MCF 10A (cell line): ENCODE measurements at regions of chr20 and their contacts with region 1.

Region 1: DNA sequence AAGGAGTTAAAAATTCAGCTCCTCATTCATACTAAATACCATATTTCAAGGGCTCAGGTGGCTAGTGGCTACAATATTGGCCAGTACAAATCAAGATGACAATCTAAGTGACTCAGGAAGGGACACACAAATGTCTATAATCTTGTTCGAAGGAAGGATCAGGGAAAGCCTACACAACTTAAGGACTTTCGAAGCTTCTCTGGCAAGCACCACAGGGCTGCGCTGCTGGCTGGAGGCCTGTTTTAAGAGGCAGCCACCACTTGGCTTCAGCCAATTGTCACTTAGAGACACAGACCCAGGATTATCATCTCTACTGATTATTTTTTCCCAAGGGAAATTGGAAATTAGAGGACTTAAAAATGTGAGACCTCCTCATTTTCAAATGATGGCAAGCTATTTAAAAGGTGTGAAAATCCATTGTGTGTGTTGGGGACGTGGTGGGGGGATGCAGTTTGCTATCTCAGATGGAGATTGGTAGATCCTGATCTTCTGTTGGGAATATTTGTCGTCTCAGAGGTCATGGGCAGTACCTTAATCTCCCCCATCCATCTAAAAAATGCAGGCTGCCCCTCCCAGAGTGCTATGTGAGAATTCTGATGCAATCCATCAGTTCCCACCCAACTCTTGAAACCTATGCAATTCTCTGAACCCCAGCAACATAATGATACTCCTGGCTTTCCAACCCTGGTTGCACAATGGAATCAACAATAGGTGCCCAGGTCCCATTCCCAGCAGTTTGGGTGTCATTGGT is 11.3 kb downstream of the ARHGAP40 start:
- DNase-seq: no peak
- H3K4me3 Mint-ChIP-seq: no peak overlapping the region
- H3K27ac Mint-ChIP-seq: no peak overlapping the region
- H3K4me1 Mint-ChIP-seq: peaks cover 15% of the 10 kb centered on the region
- H3K27me3 Mint-ChIP-seq: no peaks in the 10 kb centered on the region
- CTCF ChIP-seq: no peak

Region 2: DNA sequence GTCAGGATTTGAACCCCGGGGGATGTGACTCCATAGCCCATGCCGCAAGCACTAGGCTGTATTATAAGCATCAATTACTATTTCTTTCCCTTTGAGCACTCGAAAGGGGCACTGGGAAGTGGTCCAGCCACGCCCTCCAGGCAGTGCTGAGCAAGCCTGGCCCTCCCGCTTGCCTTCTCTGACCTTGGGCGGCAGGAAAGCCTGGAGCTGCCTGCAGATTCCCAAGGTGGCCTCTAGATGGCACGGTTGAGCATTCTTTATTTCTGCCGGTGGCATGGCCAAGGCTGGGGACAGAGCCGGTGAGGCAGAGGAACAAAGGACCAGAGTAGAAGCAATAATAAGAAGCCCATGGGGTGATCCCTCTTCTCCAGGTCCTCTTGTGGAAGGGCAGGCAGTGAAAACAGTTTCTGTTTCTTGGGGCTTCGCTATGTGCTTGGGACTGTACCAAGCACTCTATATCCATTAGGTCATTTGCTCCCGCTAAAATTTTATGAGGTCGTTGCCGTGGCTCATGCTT is 20.7 kb after region 1 on chr20:
- CTCF ChIA-PET with region 1: interaction called, 10 read pairs
- POLR2A ChIA-PET with region 1: interaction called, 3 read pairs
- intact Hi-C with region 1: no loop called
- DNase-seq: peak; percentile 63
- H3K4me3 Mint-ChIP-seq: no peak overlapping the region
- H3K27ac Mint-ChIP-seq: no peak overlapping the region
- H3K4me1 Mint-ChIP-seq: peaks cover 10% of the 10 kb centered on the region
- H3K27me3 Mint-ChIP-seq: no peaks in the 10 kb centered on the region
- CTCF ChIP-seq: peak; percentile 84

Region 3: DNA sequence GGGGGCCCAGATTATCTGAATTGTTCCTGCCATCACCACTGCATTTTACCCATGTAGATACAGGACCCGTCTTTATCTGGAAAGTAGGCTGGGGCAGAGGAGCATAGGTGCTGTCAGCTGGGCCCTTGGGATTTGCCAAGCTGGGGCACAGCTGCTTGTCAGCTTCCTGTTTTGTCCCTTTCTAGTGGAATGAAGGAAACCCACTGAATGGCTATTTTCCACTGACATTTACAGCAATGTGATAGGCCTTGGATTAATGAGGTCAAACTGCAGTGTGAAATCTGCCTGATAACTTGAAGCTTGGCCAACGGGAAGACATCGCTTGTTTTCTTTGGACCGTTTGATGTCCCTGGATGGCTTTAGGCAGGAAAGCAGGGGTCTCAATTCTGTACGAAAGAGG is 199.3 kb after region 1 on chr20:
- CTCF ChIA-PET with region 1: no interaction called
- POLR2A ChIA-PET with region 1: no interaction called
- intact Hi-C with region 1: no loop called
- DNase-seq: no peak
- H3K4me3 Mint-ChIP-seq: no peak overlapping the region
- H3K27ac Mint-ChIP-seq: no peak overlapping the region
- H3K4me1 Mint-ChIP-seq: no peaks in the 10 kb centered on the region
- H3K27me3 Mint-ChIP-seq: peaks cover 21% of the 10 kb centered on the region
- CTCF ChIP-seq: no peak

Region 4: DNA sequence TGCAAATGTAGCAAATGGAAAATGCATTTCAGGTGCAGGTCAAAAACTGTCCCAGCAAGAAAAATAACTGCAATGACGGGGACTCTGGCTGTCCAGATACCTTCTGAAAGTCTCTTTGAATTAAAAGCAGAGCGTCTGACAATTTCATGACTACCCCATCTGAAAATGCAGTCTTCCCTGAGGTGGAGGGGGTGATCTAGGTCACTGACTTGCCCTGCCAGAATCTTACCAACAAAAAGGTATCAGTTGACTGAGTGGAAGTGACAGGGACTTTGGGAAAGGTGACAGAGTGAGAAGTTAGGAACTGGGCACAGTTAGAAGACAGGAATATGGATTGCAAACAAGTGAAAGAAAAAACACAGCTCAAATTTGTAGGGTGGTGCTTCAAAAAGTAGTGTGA is 751.4 kb after region 1 on chr20:
- CTCF ChIA-PET with region 1: no interaction called
- POLR2A ChIA-PET with region 1: no interaction called
- intact Hi-C with region 1: no loop called
- DNase-seq: no peak
- H3K4me3 Mint-ChIP-seq: no peak overlapping the region
- H3K27ac Mint-ChIP-seq: no peak overlapping the region
- H3K4me1 Mint-ChIP-seq: no peaks in the 10 kb centered on the region
- H3K27me3 Mint-ChIP-seq: no peaks in the 10 kb centered on the region
- CTCF ChIP-seq: no peak